Activated B cell treated with CpG ODN at 0.5 μM for 24 hours (primary cell): ENCODE measurements at regions of chr6 and their contacts with region 1.

Region 1: GRCh38 chr6:138509371-138509770 is 10.1 kb upstream of the NHSL1 start:
- DNase-seq: no peak
- ATAC-seq: no peak
- H3K4me3 Mint-ChIP-seq: no peak overlapping the region
- H3K27ac Mint-ChIP-seq: no peak overlapping the region
- H3K4me1 Mint-ChIP-seq: peaks cover 2% of the 10 kb centered on the region
- H3K27me3 Mint-ChIP-seq: peaks cover 15% of the 10 kb centered on the region
- CTCF ChIP-seq: no peak

Region 2: GRCh38 chr6:138099832-138100231 is 409.5 kb before region 1 on chr6:
- CTCF ChIA-PET with region 1: no interaction called
- POLR2A ChIA-PET with region 1: no interaction called
- intact Hi-C with region 1: no loop called
- DNase-seq: no peak
- ATAC-seq: no peak
- H3K4me3 Mint-ChIP-seq: no peak overlapping the region
- H3K27ac Mint-ChIP-seq: no peak overlapping the region
- H3K4me1 Mint-ChIP-seq: no peaks in the 10 kb centered on the region
- H3K27me3 Mint-ChIP-seq: peaks cover 37% of the 10 kb centered on the region
- CTCF ChIP-seq: no peak

Region 3: DNA sequence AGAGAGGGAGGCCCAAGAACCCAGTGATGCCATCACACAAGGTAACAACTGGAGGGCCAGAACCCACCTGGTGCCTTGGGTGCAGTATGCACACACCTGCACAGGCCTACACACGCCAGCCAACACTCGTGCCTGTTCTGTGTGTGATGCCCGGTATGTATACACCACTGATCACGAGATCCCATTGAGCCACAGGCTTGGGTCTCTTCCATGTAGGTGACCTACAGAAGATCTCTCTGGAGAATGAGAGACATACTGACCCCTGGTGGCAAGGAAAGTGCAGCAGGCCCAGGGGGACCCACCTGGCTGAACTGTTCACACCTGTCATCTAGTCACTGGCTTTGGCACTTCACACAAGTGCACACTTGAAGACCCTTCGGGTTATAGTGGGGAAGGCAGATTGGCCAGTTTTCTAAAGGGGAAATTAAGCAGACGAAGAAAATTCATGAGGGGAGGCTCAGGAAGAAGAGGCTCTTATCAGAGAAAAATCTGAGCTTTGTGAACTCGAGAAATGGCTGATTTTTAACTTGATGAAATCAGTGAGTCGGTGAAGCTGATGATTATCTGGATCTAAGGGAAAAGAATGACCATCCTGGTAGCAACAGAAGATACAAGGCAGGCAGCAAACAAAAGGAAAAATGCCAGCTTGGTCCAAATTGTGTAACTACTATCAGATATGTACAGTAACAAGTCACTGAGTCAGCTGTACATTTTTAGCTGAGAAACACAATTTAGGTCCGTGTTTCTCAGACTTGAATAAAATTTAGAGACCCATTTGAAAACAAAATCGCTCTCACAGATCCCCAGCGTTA is 222.0 kb before region 1 on chr6:
- CTCF ChIA-PET with region 1: no interaction called
- POLR2A ChIA-PET with region 1: no interaction called
- intact Hi-C with region 1: loop called (anchors 5 kb)
- DNase-seq: no peak
- ATAC-seq: peak; percentile 28
- H3K4me3 Mint-ChIP-seq: no peak overlapping the region
- H3K27ac Mint-ChIP-seq: no peak overlapping the region
- H3K4me1 Mint-ChIP-seq: no peaks in the 10 kb centered on the region
- H3K27me3 Mint-ChIP-seq: peaks cover 7% of the 10 kb centered on the region
- CTCF ChIP-seq: no peak